Activated T-helper 1 cell treated with anti-CD3 and anti-CD28 coated beads, Interleukin-12 subunit alpha, Interleukin-12 subunit beta, Interleukin-2, Interleukin-4 antibody, amounts not matched to agents 30 ng/mL and 10 ng/mL and 1 ng/mL, durations not matched to agents 14 hours and 24 hours and 36 hours (primary cell): ENCODE measurements at regions of chr20 and their contacts with region 1.

Region 1: DNA sequence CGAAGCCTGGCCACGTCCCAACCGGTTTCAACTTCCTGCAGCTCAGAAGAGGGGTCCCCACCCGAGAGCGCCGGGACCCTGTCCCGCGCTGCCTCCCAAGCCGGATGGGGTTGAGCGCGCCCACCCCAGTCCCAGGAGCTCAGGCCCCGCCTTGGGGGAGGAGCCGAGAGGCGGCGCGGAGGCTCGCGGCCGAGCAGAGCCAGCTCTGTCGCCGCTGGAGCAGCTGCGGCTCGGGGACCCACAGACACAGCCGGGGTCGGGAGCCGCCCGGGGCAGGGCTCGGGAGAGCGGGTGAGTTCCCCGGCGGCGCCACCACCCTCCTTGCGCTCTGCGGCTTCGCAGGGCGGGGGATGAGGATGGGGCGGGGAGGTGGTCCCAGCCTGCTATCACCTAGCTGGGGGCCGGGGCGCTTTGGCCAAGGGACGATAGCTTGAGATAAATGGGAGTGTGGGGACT is at the start of gene PPP1R16B:
- DNase-seq: peak; percentile 79
- H3K4me3 Mint-ChIP-seq: peak within 1 kb of the TSS; percentile 90
- H3K27ac Mint-ChIP-seq: peak within 1 kb of the TSS; percentile 96
- H3K4me1 Mint-ChIP-seq: peaks cover 64% of the 10 kb centered on the region
- H3K27me3 Mint-ChIP-seq: no peaks in the 10 kb centered on the region
- total RNA-seq, gene PPP1R16B: 139 and 143 TPM in 2 replicates

Region 2: DNA sequence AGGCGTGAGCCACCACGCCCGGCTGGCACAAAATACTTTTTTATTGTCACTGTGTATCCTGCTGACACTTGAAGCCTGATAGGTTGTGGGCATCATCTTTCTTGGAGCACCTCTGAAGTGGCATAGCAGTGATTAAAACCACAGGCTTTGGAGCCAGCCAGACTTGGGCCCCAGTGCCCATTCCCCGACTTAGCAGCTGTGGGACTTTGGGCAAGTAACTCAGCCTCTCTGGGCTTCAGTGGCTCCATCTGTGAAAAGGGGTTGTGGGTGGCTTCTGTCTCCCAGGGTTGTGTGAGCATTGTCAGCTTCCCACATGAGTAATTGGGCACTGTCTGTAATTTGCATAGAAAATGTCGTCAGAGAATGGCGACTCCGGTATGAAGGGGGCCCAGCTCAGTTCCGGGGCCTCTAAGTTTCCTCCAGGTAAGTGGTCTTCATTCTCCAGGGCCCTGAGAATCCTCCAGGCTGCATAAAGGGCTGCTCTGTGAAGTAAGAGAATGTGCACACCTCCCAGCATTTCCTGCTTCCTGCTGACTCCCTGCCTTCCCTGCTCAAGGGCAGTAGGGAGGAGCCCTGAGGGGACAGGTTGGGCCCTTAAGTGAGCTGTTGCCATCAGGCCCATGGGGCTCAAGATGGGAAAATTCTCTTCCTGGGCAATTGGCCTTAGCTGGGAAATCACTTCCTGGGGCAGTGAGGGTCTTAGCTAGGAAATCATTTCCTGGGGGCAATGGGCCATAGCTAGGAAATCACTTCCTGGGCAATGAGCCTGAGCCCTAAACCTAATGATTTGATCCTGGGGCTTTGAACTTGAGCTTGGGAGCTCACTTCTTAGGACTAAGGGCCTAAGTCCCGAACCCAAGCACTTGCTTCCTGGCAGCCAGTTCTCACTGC is 176.7 kb before region 1 on chr20:
- intact Hi-C with region 1: no loop called
- DNase-seq: no peak
- H3K4me3 Mint-ChIP-seq: no peak overlapping the region
- H3K27ac Mint-ChIP-seq: no peak overlapping the region
- H3K4me1 Mint-ChIP-seq: peaks cover 5% of the 10 kb centered on the region
- H3K27me3 Mint-ChIP-seq: peaks cover 7% of the 10 kb centered on the region

Region 3: DNA sequence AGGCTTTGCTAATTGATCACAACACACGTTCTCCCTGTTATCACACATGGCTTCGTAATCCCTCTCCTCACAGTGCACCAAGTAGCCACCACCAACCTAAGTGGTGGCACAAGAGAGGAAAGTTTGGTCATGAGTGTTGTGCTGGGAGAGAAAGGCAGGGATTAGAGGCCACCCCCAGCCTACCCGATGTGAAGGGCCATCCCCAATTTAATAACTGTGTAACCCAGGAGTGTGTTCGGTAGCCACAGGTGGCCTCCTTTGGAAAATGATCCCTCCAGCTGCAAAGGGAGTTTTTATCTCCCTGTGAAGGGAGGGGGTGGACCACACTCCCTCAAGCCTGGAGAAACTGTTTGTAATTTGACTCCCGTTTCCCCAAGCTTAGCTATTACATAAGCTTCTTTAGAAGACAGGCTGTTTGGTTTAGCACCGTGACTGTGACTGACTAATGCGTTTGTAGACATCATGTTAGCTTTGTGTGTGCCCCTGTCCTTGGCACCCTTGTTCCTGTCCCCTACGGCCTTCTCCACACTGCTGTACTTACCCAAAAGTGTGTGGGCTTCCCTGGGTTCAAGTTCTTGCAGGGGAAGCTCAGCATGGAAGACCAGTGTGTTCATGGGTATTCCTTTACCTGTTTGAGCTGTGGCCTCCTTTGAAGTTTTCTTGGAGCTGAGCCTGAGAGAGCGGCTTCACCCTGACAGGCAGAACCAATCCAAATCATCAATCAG is 20.5 kb after region 1 on chr20:
- intact Hi-C with region 1: loop called (anchors 2 kb)
- DNase-seq: no peak
- H3K4me3 Mint-ChIP-seq: no peak overlapping the region
- H3K27ac Mint-ChIP-seq: peak overlapping the region; percentile 48
- H3K4me1 Mint-ChIP-seq: peaks cover 92% of the 10 kb centered on the region
- H3K27me3 Mint-ChIP-seq: no peaks in the 10 kb centered on the region

Region 4: DNA sequence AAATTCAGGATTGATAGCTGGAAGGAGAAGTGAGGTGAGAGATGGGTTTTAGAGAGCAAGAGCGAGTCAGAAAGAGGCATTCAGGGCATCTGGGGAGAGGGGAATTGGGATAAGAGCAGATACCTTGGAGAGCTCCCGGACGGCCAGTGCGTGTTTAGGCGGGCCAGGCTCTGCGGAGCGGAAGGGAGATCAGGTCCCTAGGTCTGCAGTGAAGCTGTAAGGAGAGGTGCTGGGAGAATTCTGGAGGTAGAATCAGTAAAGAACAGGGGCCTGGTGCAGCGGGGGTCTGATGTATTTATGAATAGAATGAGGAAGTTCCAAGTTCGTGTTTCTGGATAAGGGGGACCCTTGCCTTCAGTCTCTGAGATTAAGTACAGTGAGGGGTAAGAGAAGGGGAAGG is 73.3 kb after region 1 on chr20:
- intact Hi-C with region 1: no loop called
- DNase-seq: no peak
- H3K4me3 Mint-ChIP-seq: no peak overlapping the region
- H3K27ac Mint-ChIP-seq: peak overlapping the region; percentile 45
- H3K4me1 Mint-ChIP-seq: peaks cover 88% of the 10 kb centered on the region
- H3K27me3 Mint-ChIP-seq: no peaks in the 10 kb centered on the region